Right ventricle myocardium superior (tissue), 1 donor: ENCODE measurements at regions of chr3 and their contacts with region 1.

Region 1: GRCh38 chr3:159260049-159260662 is 458.3 kb downstream of the MFSD1 start:
- DNase-seq: no peak
- ATAC-seq: peak; percentile 68

Region 2: GRCh38 chr3:158845765-158846350 is 414.3 kb before region 1 on chr3:
- intact Hi-C with region 1: loop called (anchors 2 kb)
- DNase-seq: no peak
- ATAC-seq: peak; percentile 53

Region 3: DNA sequence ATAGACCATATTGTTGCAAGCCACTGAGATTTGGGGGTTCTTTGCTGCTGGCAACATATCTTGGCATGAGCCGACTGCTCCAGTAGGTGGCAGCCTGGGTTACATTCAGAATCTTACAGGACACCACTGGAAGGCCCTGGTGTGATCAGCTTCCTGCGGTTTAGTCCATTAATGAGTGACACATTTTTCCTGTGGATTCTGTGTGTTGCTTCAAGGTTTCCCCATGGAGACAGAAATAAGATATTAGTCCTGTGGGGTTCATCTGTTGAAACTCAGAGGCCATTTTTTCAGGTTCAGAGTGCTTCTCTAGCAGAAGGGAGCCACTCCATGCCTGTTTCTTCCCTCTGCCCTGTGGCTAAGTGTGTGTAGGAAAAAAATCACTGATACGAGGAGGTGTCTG is 342.1 kb before region 1 on chr3:
- intact Hi-C with region 1: loop called (anchors 5 kb)
- DNase-seq: no peak
- ATAC-seq: peak; percentile 67

Region 4: GRCh38 chr3:159884661-159885402 is 624.7 kb after region 1 on chr3:
- intact Hi-C with region 1: no loop called
- DNase-seq: no peak
- ATAC-seq: peak; percentile 27